Activated T-helper 1 cell treated with anti-CD3 and anti-CD28 coated beads, Interleukin-12 subunit alpha, Interleukin-12 subunit beta, Interleukin-2, Interleukin-4 antibody, amounts not matched to agents 30 ng/mL and 10 ng/mL and 1 ng/mL, durations not matched to agents 14 hours and 24 hours and 36 hours (primary cell): ENCODE measurements at regions of chr13 and their contacts with region 1.

Region 1: DNA sequence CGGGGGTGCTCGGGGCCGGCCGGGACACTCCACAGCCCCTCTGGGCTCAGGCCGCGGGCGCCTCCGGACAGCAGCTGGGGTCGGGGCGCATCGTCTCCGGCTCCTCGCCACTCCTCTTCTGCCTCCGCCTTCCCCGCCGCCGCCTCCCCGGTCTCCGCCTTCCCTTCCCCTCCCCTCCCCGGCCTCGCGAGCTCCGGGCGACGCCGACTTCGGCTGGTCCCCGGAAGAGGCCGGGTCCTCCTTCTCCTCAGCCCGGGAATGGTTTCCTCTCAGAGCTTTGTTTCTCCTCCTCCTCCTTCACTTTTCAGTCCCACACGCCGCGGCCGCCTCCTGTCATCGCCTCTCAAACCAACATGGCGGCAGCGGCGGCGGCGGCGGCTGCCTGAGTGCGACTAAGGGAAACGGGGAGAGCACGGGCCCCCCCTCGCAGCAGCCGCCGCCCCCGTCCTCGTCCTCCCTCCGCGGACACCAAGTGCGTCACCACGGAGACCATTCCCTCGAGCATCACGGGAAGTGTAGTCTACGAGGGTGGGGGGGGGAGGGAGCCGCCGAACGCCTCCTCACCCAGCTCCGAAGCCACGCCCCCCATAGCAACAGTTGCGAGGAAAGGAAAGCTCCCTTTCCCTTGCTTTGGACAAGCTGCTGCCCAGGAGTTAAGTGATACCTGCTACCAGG is at the start of gene UBL3:
- DNase-seq: peak; percentile 90
- H3K4me3 Mint-ChIP-seq: peak within 1 kb of the TSS; percentile 97
- H3K27ac Mint-ChIP-seq: peak within 1 kb of the TSS; percentile 98
- H3K4me1 Mint-ChIP-seq: peaks cover 50% of the 10 kb centered on the region
- H3K27me3 Mint-ChIP-seq: no peaks in the 10 kb centered on the region
- total RNA-seq, gene UBL3: 10.9 and 12.8 TPM in 2 replicates

Region 2: DNA sequence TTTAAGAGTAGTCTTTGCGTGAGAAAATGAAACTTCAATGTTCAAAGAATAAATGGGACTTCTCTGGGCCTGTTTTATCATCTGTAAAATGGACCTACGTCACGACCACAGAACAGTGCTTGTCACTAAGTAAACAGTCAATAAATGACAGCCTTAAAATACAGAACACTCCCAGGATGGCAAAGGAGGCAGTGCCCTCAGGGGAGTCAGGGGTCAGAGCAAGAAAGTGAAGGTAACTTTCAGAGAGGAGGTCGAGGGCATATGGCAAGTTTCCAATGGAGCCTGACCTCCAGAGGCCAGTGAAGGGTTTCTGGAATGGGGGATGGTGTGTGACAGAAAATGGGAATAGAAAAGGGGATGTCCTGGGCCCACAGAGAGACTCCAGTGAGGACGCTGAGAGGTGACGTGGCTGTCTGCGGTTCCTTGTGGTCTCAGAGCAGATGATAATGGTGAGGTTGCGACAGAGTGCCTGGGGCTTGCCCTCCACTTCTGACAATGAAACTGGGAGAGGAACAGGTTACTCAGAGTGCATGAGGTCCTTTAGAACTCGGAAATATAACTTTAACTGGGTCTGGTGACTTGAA is 91.7 kb before region 1 on chr13:
- intact Hi-C with region 1: loop called (anchors 5 kb)
- DNase-seq: peak; percentile 26
- H3K4me3 Mint-ChIP-seq: peak overlapping the region; percentile 32
- H3K27ac Mint-ChIP-seq: peak overlapping the region; percentile 74
- H3K4me1 Mint-ChIP-seq: peaks cover 22% of the 10 kb centered on the region
- H3K27me3 Mint-ChIP-seq: peaks cover 3% of the 10 kb centered on the region

Region 3: GRCh38 chr13:29835280-29836061 is 14.9 kb before region 1 on chr13:
- intact Hi-C with region 1: loop called (anchors 1 kb)
- DNase-seq: no peak
- H3K4me3 Mint-ChIP-seq: no peak overlapping the region
- H3K27ac Mint-ChIP-seq: no peak overlapping the region
- H3K4me1 Mint-ChIP-seq: peaks cover 13% of the 10 kb centered on the region
- H3K27me3 Mint-ChIP-seq: peaks cover 4% of the 10 kb centered on the region

Region 4: DNA sequence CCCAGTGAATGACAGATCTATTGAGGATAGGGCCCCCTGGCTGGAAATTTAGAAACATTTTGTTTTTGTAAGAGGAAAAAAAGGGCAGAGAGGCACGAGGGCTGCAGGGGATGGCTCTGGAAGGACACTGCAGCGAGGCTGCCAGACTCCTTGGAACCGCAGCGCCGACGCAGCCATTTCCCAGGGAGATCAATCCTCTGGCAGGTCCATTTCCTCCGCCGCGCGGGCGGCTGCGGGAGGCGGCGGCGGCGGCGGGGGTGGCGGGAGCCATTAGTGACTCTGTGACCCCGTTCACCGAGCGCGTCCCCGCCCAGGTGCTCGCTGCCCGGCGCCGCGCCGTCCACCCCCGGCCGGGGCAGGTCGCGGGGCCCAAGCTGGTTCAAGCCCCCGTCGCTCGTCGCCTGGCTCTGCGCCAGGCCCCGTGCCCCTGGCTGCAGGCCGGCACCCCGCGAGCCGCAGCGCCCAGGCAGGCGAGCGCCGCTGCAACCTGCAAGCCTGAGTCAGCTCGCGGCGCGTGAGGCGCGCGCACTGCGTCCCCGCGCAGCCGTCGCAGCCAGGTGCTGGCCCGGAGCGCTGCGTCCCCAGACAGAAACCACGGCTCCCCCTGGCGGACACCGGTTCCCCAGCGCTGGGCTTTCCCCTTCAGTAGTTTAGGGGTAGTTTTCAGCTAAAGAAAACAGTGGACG is 264.4 kb after region 1 on chr13:
- intact Hi-C with region 1: loop called (anchors 1 kb)
- DNase-seq: peak; percentile 86
- H3K4me3 Mint-ChIP-seq: peak overlapping the region; percentile 81
- H3K27ac Mint-ChIP-seq: no peak overlapping the region
- H3K4me1 Mint-ChIP-seq: peaks cover 44% of the 10 kb centered on the region
- H3K27me3 Mint-ChIP-seq: peaks cover 18% of the 10 kb centered on the region

Region 5: DNA sequence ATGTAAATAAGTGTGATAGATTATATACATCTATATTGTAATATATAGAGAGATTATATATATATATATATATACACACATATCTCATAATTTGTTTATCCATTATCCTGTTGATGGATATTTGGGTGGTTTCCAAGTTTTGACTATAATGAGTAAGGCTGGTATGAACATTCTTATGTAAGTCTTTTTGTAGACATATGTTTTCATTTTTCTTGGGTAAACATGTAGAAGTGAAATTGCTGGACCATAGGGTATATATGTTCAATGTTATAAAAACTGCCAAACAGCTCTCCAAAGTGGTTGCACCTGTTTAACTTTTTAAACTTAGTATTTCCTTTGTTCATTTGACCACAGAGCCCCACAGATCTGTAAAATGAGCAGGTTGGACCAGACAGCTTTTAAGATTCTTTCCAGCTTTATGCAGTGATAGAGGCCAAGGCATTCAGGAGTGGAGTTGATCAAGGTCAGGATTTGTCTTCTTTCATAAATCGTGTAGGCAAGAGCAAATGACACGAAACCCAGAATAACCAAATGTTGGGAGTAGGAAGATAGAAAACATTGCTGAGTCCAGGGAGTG is 478.7 kb after region 1 on chr13:
- intact Hi-C with region 1: no loop called
- DNase-seq: no peak
- H3K4me3 Mint-ChIP-seq: no peak overlapping the region
- H3K27ac Mint-ChIP-seq: no peak overlapping the region
- H3K4me1 Mint-ChIP-seq: peaks cover 12% of the 10 kb centered on the region
- H3K27me3 Mint-ChIP-seq: peaks cover 4% of the 10 kb centered on the region

Region 6: GRCh38 chr13:30371649-30372265 is 521.4 kb after region 1 on chr13:
- intact Hi-C with region 1: loop called (anchors 5 kb)
- DNase-seq: peak; percentile 65
- H3K4me3 Mint-ChIP-seq: peak overlapping the region; percentile 68
- H3K27ac Mint-ChIP-seq: peak overlapping the region; percentile 84
- H3K4me1 Mint-ChIP-seq: peaks cover 80% of the 10 kb centered on the region
- H3K27me3 Mint-ChIP-seq: no peaks in the 10 kb centered on the region

Region 7: GRCh38 chr13:31274390-31274789 is 1424.0 kb after region 1 on chr13:
- intact Hi-C with region 1: no loop called
- DNase-seq: no peak
- H3K4me3 Mint-ChIP-seq: no peak overlapping the region
- H3K27ac Mint-ChIP-seq: no peak overlapping the region
- H3K4me1 Mint-ChIP-seq: no peaks in the 10 kb centered on the region
- H3K27me3 Mint-ChIP-seq: no peaks in the 10 kb centered on the region